Adrenal gland (tissue), 19 donors: ENCODE measurements at regions of chr17 and their contacts with region 1.

Region 1: DNA sequence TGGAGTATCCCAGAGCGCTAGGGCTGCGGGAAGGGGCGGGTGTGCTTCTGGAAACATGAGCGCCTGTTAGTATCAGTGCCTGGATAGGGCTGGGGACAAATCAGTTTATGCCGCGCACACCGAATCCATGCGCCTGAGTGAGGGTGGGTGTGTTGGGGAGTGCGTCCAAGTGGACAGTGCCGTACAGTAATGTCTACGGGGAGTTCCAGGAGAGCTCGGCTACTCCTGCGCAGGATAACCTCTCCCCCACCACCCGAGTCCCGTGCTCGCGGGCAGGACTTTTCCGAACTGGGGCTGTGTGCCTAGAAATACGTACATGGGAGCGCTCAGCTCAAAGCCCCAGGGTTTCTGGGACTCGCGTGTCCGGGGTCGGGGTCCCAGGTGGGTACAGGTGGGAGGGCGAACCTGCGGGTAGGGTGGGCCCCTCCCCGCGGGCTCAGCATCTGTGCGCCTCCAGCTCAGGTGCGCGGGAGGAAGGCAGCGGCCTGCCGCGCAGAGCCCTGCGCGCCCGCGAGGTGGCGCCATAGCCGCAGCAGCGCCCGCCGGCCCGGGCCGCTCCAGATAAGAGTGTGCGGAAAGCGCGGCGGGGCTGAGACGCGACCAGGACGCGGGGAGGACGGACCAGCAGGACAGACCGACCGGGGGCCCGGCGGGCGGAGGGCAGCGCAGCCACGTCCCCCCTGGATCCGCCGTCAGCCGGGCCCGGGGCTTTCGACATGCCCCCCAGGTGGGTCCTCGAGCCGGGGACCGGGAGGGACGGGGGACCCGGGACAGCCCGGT is at the start of gene HIC1:
- DNase-seq: peak; percentile 69 to 88 (median 79)
- H3K4me3 ChIP-seq: peak within 1 kb of the TSS in 3 of 4 donors; percentile 30 to 72 (median 40)
- H3K27ac ChIP-seq: peak within 1 kb of the TSS in 4 of 5 donors; percentile 61 to 88 (median 76)
- H3K4me1 ChIP-seq: peaks cover 16 to 30% of the 10 kb centered on the region in 2 donors
- H3K27me3 ChIP-seq: no peaks in the 10 kb centered on the region
- CTCF ChIP-seq: peak; percentile 49 to 98 (median 83)
- POLR2A ChIP-seq: peak; percentile 61 to 73
- total RNA-seq, gene HIC1: 4.3 to 61.8 (median 30.6) TPM

Region 2: GRCh38 chr17:2172077-2172851 is 117.6 kb after region 1 on chr17:
- intact Hi-C with region 1: loop called in 1 of 2 experiments (anchors 10 kb)
- DNase-seq: peak; percentile 78 to 90 (median 85)
- H3K4me3 ChIP-seq: peak overlapping the region in 1 of 4 donors; percentile 39
- H3K27ac ChIP-seq: peak overlapping the region; percentile 73 to 96 (median 88)
- H3K4me1 ChIP-seq: peaks cover 34 to 52% of the 10 kb centered on the region in 2 donors
- H3K27me3 ChIP-seq: no peaks in the 10 kb centered on the region
- CTCF ChIP-seq: no peak
- POLR2A ChIP-seq: peak in 1 of 2 donors; percentile 61

Region 3: GRCh38 chr17:2244545-2245525 is 190.1 kb after region 1 on chr17:
- intact Hi-C with region 1: loop called (anchors 2 to 5 kb)
- DNase-seq: peak; percentile 81 to 94 (median 87)
- H3K4me3 ChIP-seq: no peak overlapping the region
- H3K27ac ChIP-seq: peak overlapping the region in 3 of 5 donors; percentile 10 to 73 (median 70)
- H3K4me1 ChIP-seq: peaks cover 7 to 24% of the 10 kb centered on the region in 2 donors
- H3K27me3 ChIP-seq: no peaks in the 10 kb centered on the region
- CTCF ChIP-seq: peak; percentile 91 to 99 (median 98)
- POLR2A ChIP-seq: no peak

Region 4: GRCh38 chr17:2282297-2282873 is 227.7 kb after region 1 on chr17:
- intact Hi-C with region 1: loop called (anchors 5 to 10 kb)
- DNase-seq: peak in 1 of 7 donors; percentile 30
- H3K4me3 ChIP-seq: no peak overlapping the region
- H3K27ac ChIP-seq: peak overlapping the region in 2 of 5 donors; percentile 4 to 33
- H3K4me1 ChIP-seq: no peaks in the 10 kb centered on the region
- H3K27me3 ChIP-seq: no peaks in the 10 kb centered on the region
- CTCF ChIP-seq: peak; percentile 53 to 86 (median 60)
- POLR2A ChIP-seq: no peak